Endothelial cell of umbilical vein (primary cell): ENCODE measurements at regions of chr13 and their contacts with region 1.

Region 1: DNA sequence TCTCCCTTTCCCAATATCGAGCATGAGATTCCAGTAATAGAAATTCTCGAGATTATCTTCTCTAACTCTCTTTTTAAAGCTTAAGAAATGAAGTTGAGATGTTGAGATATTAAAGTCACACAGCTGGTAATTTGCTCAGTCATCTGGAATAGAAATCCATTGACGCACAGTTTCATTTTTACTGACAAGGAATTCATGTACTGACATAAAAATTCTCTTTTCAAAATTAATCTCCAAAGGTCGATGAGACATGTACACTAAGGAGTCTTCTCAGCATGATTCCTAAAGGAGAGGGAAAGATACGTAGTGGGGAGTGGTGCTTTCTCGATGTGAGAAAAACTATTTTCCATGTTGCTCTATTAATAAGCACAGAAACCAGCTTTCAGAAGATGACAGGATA is 1639.5 kb upstream of the MIR17HG start:
- DNase-seq: no peak
- H3K4me3 ChIP-seq: no peak overlapping the region
- H3K27ac ChIP-seq: no peak overlapping the region
- H3K4me1 ChIP-seq: no peaks in the 10 kb centered on the region
- H3K27me3 ChIP-seq: no peaks in the 10 kb centered on the region
- CTCF ChIP-seq: no peak
- POLR2A ChIP-seq: no peak

Region 2: DNA sequence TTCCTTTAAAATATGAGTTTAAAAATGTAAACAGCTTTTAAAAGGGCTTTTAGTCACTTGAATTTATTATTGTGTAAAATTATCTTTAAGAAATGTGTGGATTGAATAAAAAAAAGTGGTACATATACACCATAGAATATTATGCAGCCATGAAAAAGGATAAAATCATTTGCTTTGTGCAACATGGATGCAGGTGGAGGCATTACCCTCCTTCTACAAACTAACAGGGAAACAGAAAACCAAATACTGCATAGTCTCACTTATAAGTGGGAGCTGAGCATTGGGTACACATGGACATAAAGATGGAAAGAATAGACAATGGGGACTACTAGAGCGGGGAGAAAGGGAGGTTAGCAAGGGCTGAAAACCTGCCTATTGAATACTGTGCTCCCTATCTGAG is 1037.5 kb before region 1 on chr13:
- CTCF ChIA-PET with region 1: no interaction called
- POLR2A ChIA-PET with region 1: no interaction called
- dilution Hi-C with region 1: no loop called
- intact Hi-C with region 1: no loop called
- DNase-seq: no peak
- H3K4me3 ChIP-seq: no peak overlapping the region
- H3K27ac ChIP-seq: no peak overlapping the region
- H3K4me1 ChIP-seq: no peaks in the 10 kb centered on the region
- H3K27me3 ChIP-seq: no peaks in the 10 kb centered on the region
- CTCF ChIP-seq: no peak
- POLR2A ChIP-seq: no peak

Region 3: DNA sequence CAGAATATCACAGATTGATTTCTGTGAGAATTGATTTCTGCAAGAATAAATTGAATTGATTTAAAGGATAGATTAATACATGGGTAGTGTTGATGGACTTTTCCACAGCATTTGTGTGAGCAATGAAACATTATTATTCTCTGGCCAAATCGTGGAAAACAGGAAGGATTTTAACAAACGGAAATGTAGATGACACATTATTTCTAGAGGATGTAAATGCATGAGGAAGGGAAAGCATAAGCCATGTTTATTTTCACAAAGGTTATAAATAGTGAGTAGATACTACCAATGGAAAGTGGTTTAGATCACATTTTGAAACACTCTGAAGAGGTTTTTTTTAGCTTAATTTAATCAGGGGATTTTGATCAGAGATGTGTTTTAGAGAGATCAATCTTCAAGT is 104.8 kb after region 1 on chr13:
- CTCF ChIA-PET with region 1: no interaction called
- POLR2A ChIA-PET with region 1: no interaction called
- dilution Hi-C with region 1: no loop called
- intact Hi-C with region 1: loop called (anchors 1 kb)
- DNase-seq: peak; percentile 79
- H3K4me3 ChIP-seq: no peak overlapping the region
- H3K27ac ChIP-seq: peak overlapping the region; percentile 57
- H3K4me1 ChIP-seq: peaks cover 14% of the 10 kb centered on the region
- H3K27me3 ChIP-seq: no peaks in the 10 kb centered on the region
- CTCF ChIP-seq: no peak
- POLR2A ChIP-seq: no peak

Region 4: GRCh38 chr13:90008707-90009149 is 300.7 kb after region 1 on chr13:
- CTCF ChIA-PET with region 1: no interaction called
- POLR2A ChIA-PET with region 1: no interaction called
- dilution Hi-C with region 1: no loop called
- intact Hi-C with region 1: no loop called
- DNase-seq: no peak
- H3K4me3 ChIP-seq: no peak overlapping the region
- H3K27ac ChIP-seq: no peak overlapping the region
- H3K4me1 ChIP-seq: no peaks in the 10 kb centered on the region
- H3K27me3 ChIP-seq: no peaks in the 10 kb centered on the region
- CTCF ChIP-seq: no peak
- POLR2A ChIP-seq: no peak